ENCODE measurements at regions of chr12 and their contacts with region 1.

Region 1: DNA sequence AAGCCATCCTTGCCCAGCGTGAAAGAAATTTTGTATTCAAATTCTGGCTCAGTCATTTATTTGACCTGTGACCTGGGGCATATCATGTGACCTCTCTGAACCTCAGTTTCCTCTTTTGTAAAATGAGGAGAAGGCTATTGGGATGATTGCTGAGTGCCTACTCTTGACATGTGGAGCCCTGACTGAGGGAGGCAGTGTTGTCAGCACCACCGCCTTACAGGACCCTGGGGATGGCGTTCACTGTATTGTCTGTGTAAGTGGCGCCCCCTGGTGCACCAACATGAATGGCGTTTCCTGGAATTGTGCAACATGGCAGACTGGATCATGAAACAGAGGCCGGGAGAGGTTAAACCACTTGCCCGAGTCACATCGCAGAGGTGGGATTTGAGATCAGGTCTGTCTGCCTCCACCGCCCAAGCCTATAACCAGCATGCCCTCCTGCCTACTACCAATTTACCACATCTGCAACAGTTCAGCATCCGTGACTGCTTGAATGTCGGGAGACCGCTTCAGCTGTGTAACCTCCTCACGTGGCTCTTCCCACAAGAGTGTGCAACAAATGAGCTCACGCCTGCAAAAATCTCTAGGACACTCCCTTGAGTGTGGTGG is 20.1 kb upstream of the CCDC63 start:
- DNase-seq: peak; percentile 55 to 90
- ATAC-seq: peak; percentile 93 to 99
- H3K4me3 ChIP-seq: peak overlapping the region in 3 of 4 donors; percentile 29 to 41 (median 34)
- H3K27ac ChIP-seq: no peak overlapping the region
- H3K4me1 ChIP-seq: peaks cover 0 to 4% of the 10 kb centered on the region in 2 donors
- H3K27me3 ChIP-seq: no peaks in the 10 kb centered on the region
- CTCF ChIP-seq: peak; percentile 75 to 97 (median 85)
- POLR2A ChIP-seq: no peak

Region 2: GRCh38 chr12:110449799-110450497 is 376.7 kb before region 1 on chr12 and contains the start of gene ARPC3:
- in situ Hi-C with region 1: loop called in 1 of 4 experiments (anchors 25 kb)
- intact Hi-C with region 1: loop called (anchors 1 kb)
- DNase-seq: peak; percentile 89 to 93
- ATAC-seq: peak; percentile 97 to 98
- H3K4me3 ChIP-seq: peak within 1 kb of the TSS; percentile 83 to 99 (median 92)
- H3K27ac ChIP-seq: peak within 1 kb of the TSS; percentile 86 to 97 (median 90)
- H3K4me1 ChIP-seq: peaks cover 7 to 8% of the 10 kb centered on the region in 2 donors
- H3K27me3 ChIP-seq: no peaks in the 10 kb centered on the region
- CTCF ChIP-seq: peak; percentile 81 to 95 (median 87)
- POLR2A ChIP-seq: peak; percentile 43 to 59
- total RNA-seq, gene ARPC3: 170 to 327 (median 213) TPM

Region 3: DNA sequence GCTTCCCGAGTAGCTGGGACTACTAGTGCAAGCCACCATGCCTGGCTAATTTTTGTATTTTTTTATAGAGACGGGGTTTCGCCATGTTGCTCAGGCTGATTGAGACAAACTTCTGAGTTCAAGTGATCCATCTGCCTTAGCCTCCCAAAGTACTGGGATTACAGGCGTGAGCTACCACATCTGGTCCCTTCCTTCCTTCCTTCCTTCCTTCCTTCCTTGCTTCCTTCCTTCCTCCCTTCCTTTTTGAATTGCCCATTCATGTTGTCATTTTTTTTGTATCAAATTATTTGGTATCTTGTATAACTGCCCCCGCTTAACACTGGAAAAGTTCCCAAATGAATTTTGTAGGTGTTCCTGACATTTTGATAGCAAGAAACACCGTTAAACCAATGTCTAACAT is 312.9 kb before region 1 on chr12:
- in situ Hi-C with region 1: loop called in 2 of 4 experiments (anchors 10 kb)
- intact Hi-C with region 1: loop called (anchors 2 kb)
- DNase-seq: no peak
- ATAC-seq: no peak
- H3K4me3 ChIP-seq: no peak overlapping the region
- H3K27ac ChIP-seq: no peak overlapping the region
- H3K4me1 ChIP-seq: no peaks in the 10 kb centered on the region
- H3K27me3 ChIP-seq: no peaks in the 10 kb centered on the region
- CTCF ChIP-seq: no peak
- POLR2A ChIP-seq: no peak

Region 4: DNA sequence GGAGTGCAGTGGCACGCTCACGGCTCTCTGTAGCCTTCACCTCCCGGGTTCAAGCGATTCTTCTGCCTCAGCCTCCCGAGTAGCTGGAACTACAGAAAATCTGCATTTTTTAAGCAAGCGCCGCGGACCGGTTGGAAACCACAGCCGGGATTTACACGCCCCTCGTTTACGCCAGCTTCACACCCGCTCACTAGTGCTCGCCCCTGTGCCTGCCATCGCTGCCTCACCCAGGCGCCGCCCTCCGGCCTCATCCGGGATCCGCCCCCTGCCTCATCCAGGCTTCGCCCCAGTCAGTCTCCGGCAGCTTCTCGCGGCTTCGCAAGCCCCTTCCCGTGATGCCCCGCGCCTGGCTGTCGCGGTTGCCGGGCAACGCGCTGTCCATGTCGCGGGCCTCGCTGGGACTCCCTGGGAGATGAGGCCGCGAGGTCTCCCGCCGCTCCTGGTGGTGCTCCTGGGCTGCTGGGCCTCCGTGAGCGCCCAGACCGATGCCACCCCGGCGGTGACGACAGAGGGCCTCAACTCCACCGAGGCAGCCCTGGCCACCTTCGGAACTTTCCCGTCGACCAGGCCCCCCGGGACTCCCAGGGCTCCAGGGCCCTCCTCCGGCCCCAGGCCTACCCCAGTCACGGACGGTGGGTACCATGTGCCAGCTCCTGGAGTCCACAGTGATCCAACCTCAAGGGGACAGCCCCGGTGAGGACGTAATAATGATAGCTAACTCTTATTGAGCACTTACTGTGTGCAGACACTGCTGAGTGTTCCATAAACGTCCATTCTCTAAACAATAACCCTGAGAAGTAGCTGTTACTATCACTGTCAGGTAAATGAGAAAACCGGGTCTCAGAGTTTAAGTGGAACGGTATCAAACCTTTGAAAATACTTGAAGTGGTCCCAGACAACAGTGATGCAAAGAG is 212.7 kb before region 1 on chr12 and contains the start of gene TCTN1:
- in situ Hi-C with region 1: no loop called
- intact Hi-C with region 1: loop called (anchors 5 kb)
- DNase-seq: peak; percentile 93 to 95
- ATAC-seq: peak; percentile 94 to 97
- H3K4me3 ChIP-seq: peak within 1 kb of the TSS; percentile 67 to 94 (median 86)
- H3K27ac ChIP-seq: peak within 1 kb of the TSS; percentile 55 to 82 (median 70)
- H3K4me1 ChIP-seq: peaks cover 10 to 12% of the 10 kb centered on the region in 2 donors
- H3K27me3 ChIP-seq: no peaks in the 10 kb centered on the region
- CTCF ChIP-seq: peak in 1 of 5 experiments; percentile 23
- POLR2A ChIP-seq: peak; percentile 55 to 66
- total RNA-seq, gene TCTN1: 4.7 to 30.8 (median 22.7) TPM

Region 5: GRCh38 chr12:110698171-110698902 is 128.4 kb before region 1 on chr12:
- in situ Hi-C with region 1: no loop called
- intact Hi-C with region 1: no loop called
- DNase-seq: peak; percentile 64 to 83
- ATAC-seq: peak; percentile 82 to 94
- H3K4me3 ChIP-seq: peak overlapping the region; percentile 16 to 57 (median 29)
- H3K27ac ChIP-seq: peak overlapping the region; percentile 3 to 64 (median 46)
- H3K4me1 ChIP-seq: peaks cover 0 to 15% of the 10 kb centered on the region in 2 donors
- H3K27me3 ChIP-seq: no peaks in the 10 kb centered on the region
- CTCF ChIP-seq: peak; percentile 60 to 78 (median 69)
- POLR2A ChIP-seq: no peak

Region 6: DNA sequence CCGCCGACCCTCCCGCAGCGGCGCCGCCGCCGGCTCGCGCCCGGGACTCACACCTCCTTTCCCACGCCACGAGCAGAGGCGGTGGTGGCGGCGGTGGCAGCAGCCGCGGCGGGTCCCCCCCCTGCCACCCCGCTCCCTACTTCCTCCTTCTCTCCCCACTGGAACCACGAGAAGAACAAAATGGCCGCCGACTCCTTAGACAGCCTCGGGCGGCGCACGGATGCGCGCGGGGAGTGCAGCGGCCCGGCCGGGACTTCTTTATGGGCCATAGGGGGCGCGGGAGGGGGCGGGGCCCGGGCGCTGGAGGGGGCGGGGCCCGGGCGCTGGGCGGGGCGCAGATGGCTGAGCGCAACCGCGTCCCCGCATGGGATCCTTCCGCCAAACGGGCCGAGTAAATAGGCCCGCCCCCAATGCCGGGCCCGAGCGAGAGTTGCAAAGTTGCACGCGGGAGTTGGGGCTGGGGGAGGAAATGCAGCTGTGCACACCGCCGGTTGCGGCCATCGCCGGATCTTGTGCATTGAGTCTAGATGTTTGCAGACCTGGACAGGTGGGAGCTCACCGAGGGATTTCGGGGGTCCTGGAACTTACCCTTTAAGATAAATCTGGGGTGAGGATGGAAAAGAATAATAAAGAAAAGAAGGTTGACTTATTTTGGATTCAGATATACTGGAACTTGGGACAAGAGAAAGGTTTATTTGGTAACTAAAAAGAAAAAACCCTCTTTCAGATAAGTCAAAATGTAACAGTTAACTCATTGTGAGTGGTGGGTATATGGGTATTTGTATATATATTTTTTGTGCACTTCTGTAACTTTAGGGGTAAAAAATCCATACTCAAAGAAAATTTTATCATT is 83.8 kb before region 1 on chr12 and contains the start of gene PPP1CC:
- in situ Hi-C with region 1: no loop called
- intact Hi-C with region 1: no loop called
- DNase-seq: peak; percentile 89 to 92
- ATAC-seq: peak; percentile 88 to 89
- H3K4me3 ChIP-seq: peak within 1 kb of the TSS; percentile 92 to 100 (median 95)
- H3K27ac ChIP-seq: peak within 1 kb of the TSS; percentile 86 to 98 (median 94)
- H3K4me1 ChIP-seq: peaks cover 48% of the 10 kb centered on the region in 2 donors
- H3K27me3 ChIP-seq: no peaks in the 10 kb centered on the region
- CTCF ChIP-seq: peak in 1 of 5 experiments; percentile 23
- POLR2A ChIP-seq: peak; percentile 80 to 81
- total RNA-seq, gene PPP1CC: 96.4 to 226 (median 154) TPM

Measured in gastrocnemius medialis (tissue), 4 donors.